ENCODE measurements at regions of chr16 and their contacts with region 1.

Region 1: GRCh38 chr16:82671741-82672140 is 45.0 kb downstream of the CDH13 start:
- DNase-seq: peak in 9 of 14 experiments; percentile 8 to 66 (median 37)
- ATAC-seq: no peak
- H3K4me3 ChIP-seq: no peak overlapping the region
- H3K4me3 Mint-ChIP-seq: no peak overlapping the region
- H3K27ac ChIP-seq: no peak overlapping the region
- H3K27ac Mint-ChIP-seq: no peak overlapping the region
- H3K4me1 ChIP-seq: no peaks in the 10 kb centered on the region
- H3K4me1 Mint-ChIP-seq: no peaks in the 10 kb centered on the region
- H3K27me3 ChIP-seq: no peaks in the 10 kb centered on the region
- H3K27me3 Mint-ChIP-seq: no peaks in the 10 kb centered on the region
- CTCF ChIP-seq: peak; percentile 64

Region 2: DNA sequence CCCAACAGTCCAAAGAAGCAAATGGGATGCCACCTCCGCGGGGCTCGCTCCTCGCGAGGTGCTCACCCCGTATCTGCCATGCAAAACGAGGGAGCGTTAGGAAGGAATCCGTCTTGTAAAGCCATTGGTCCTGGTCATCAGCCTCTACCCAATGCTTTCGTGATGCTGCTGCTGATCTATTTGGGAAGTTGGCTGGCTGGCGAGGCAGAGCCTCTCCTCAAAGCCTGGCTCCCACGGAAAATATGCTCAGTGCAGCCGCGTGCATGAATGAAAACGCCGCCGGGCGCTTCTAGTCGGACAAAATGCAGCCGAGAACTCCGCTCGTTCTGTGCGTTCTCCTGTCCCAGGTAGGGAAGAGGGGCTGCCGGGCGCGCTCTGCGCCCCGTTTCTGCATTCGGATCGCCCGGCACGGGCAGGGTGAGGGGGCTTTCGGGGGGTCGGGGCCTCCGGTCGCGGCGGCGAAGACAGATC is 44.9 kb before region 1 on chr16 and contains the start of gene CDH13:
- CTCF ChIA-PET with region 1: interaction called, 3 read pairs
- POLR2A ChIA-PET with region 1: no interaction called
- intact Hi-C with region 1: loop called in 1 of 2 experiments (anchors 10 kb)
- DNase-seq: no peak
- ATAC-seq: no peak
- H3K4me3 ChIP-seq: no peak within 1 kb of the TSS
- H3K4me3 Mint-ChIP-seq: no peak within 1 kb of the TSS
- H3K27ac ChIP-seq: no peak within 1 kb of the TSS
- H3K27ac Mint-ChIP-seq: no peak within 1 kb of the TSS
- H3K4me1 ChIP-seq: peaks cover 14% of the 10 kb centered on the region
- H3K4me1 Mint-ChIP-seq: no peaks in the 10 kb centered on the region
- H3K27me3 ChIP-seq: peaks cover 49 to 54% of the 10 kb centered on the region in 2 experiments
- H3K27me3 Mint-ChIP-seq: peaks cover 83% of the 10 kb centered on the region
- CTCF ChIP-seq: no peak
- total RNA-seq, gene CDH13: not detected

Region 3: DNA sequence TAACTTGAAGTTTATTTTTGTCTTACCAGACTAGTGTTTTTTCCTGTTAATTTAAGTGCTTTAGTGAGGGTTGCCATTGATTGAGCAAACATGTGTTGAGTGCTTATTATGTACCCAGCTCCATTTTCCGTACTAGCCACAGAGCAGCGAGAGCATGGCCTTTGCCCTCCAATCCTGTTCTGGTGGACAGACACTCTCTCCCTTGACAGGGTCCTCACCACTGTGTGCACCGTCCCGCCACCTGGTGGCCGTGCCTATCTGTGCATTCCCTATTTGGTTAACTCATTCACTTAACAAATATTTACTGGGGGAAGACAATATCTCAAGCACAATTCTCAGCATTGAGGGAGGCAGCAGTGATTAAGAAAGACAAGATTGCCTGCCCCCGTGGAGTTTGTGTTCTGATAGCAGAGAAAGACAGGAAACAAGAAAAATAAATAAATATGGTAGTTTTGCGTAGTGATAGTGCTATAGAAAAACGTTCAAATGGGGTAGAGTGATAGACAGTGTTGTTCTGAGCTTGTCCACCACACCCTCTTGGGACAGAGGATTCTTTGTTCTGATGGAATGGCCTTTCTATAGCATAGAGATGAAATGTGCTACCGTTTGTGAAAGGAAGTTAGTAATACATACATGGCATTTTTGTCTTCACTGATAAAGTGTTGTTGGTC is 31.9 kb before region 1 on chr16:
- CTCF ChIA-PET with region 1: interaction called, 3 read pairs
- POLR2A ChIA-PET with region 1: no interaction called
- intact Hi-C with region 1: loop called (anchors 1 to 2 kb)
- DNase-seq: peak; percentile 15 to 66 (median 34)
- ATAC-seq: no peak
- H3K4me3 ChIP-seq: no peak overlapping the region
- H3K4me3 Mint-ChIP-seq: no peak overlapping the region
- H3K27ac ChIP-seq: no peak overlapping the region
- H3K27ac Mint-ChIP-seq: no peak overlapping the region
- H3K4me1 ChIP-seq: no peaks in the 10 kb centered on the region
- H3K4me1 Mint-ChIP-seq: peaks cover 5% of the 10 kb centered on the region
- H3K27me3 ChIP-seq: no peaks in the 10 kb centered on the region
- H3K27me3 Mint-ChIP-seq: no peaks in the 10 kb centered on the region
- CTCF ChIP-seq: peak; percentile 73

Region 4: DNA sequence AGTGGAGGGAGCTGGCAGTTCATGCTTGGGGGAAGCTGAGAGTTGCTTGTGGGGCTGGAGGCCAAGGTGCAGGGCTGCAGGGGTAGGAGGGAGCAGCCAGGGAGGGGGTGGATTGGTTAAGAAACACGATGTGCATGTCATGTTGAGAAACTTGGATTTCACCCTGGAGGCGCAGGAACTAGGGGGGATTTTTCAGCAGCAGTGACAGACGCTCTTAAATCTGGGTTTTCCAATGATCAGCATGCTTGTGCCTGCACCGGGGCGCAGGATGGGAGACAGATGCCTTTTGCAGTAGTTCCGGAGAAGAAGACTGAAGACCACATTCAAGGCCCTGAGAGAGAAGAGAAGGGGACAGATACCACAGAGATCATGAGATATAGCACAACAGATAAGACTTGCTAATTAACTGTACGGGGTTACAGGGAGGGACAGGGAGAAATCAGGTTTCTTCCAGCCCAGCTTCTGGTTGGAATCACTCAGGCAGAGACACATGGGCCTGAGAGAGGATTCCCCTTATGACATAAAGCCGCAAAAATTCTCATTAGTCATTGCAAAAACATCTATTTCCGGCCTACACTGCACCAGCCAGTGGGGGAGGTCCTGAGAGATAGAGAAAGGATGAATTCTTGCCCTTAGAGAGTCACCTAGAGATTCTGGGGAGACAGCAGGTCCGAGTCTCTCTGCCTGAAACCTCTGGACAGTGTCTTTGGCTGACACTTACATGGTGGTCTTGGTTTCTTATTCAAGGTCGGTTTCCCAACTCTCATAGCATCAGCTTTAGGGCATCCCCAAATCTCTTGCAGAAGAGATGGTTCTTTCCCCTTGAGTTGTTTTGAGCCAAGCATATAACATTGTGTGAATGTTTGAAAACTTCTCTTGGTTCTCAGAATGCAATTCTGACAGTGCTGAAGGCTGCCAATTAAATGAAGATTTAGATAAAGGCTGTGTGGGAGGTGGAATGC is 17.9 kb before region 1 on chr16:
- CTCF ChIA-PET with region 1: interaction called, 3 read pairs
- POLR2A ChIA-PET with region 1: interaction called, 10 read pairs
- intact Hi-C with region 1: loop called in 1 of 2 experiments (anchors 2 kb)
- DNase-seq: peak in 13 of 14 experiments; percentile 5 to 83 (median 28)
- ATAC-seq: peak; percentile 62
- H3K4me3 ChIP-seq: no peak overlapping the region
- H3K4me3 Mint-ChIP-seq: peak overlapping the region; percentile 52
- H3K27ac ChIP-seq: peak overlapping the region; percentile 71 to 80
- H3K27ac Mint-ChIP-seq: peak overlapping the region; percentile 86
- H3K4me1 ChIP-seq: peaks cover 77% of the 10 kb centered on the region
- H3K4me1 Mint-ChIP-seq: peaks cover 99% of the 10 kb centered on the region
- H3K27me3 ChIP-seq: no peaks in the 10 kb centered on the region
- H3K27me3 Mint-ChIP-seq: no peaks in the 10 kb centered on the region
- CTCF ChIP-seq: no peak

Measured in CD4-positive, alpha-beta T cell (primary cell).